ENCODE measurements at regions of chr1 and their contacts with region 1.

Region 1: DNA sequence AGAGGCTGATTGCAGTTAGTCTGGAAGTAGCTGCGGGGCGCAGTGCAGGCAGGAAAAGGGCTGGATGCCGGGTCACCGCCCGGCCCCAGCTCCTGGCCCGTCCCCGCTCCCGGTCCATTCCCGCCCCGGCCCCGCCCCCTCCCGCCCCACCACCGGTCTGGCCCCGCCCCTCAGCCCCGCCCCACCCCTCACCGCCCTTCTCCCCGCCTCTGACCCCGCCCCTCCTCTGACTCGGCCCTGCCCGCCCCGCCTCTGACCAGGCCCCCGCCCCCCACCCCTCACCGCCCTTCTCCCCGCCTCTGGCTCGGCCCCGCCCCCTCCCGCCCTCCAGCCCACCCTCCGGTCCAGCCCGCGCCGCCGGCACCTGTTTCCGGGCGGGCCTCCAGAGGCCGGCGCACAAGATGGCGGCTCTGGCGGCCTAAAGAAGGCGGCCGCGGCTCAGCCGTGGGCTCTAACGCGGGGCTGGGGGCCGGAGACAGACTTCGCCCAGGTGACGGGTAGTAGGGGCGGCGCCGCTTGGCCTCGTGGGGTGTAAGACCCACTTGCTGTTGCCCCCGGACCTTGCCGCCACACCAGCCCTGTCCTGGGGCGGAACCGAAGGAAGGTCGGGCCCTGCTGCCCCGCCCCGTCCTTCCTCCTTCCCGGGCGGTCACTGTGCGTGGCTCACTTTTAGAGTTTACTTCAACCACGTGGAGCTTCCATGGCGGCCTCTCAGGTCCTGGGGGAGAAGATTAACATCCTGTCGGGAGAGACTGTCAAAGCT is at the start of gene UBIAD1:
- DNase-seq: peak; percentile 76
- ATAC-seq: peak; percentile 88
- H3K4me3 ChIP-seq: peak within 1 kb of the TSS; percentile 93
- H3K27ac ChIP-seq: peak within 1 kb of the TSS; percentile 79
- H3K4me1 ChIP-seq: peaks cover 10% of the 10 kb centered on the region
- H3K27me3 ChIP-seq: no peaks in the 10 kb centered on the region
- CTCF ChIP-seq: no peak
- total RNA-seq, gene UBIAD1: 14.5 and 14.8 TPM in 2 replicates

Region 2: DNA sequence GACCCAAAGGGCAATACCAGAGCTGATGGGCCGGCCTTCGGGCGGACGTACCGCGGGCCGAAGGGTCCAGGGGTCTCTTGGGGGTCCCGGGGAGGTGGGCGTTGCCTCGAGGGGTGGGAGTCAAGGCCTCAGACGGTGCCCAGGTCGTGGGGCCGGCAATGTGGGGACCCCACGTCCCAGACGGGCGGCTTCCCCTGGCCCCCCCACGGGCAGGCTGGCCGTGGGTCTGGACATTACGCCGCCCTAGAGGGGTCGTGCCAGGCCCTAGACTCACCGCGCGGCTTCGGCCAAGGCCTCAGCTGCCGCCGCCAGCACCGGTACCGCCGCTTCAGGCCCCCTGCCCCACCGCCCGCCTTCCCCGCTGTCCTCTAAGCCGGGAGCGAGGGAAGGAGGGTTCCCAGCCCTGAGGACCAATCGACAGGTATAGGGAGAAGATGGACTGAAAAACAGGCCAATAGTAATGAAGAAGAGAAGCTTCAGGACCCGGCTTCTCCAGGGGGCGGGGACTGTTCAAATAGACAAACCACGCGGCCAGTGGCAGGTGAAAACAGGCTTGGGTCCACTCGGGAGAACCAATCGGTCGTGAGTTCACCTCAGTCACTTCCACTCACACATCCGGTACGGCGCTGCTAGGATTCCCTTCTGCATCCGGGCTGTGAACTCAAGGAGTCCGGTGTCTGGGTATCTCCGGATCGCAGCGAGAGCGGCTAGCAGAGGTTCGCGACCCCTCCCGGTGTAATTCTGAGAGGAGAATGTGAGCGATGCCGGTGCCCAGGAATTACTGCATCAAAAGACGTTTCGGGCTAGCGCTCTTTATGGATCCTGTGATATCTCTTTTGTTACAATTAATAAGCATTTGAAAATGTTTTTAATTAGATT is 10.6 kb before region 1 on chr1 and contains the start of gene MTOR:
- CTCF ChIA-PET with region 1: interaction called, 3 read pairs
- POLR2A ChIA-PET with region 1: interaction called, 8 read pairs
- intact Hi-C with region 1: loop called (anchors 1 kb)
- DNase-seq: peak; percentile 99
- ATAC-seq: peak; percentile 97
- H3K4me3 ChIP-seq: peak within 1 kb of the TSS; percentile 96
- H3K27ac ChIP-seq: no peak within 1 kb of the TSS
- H3K4me1 ChIP-seq: peaks cover 5% of the 10 kb centered on the region; the same call in 1 of the 2 replicates
- H3K27me3 ChIP-seq: no peaks in the 10 kb centered on the region
- CTCF ChIP-seq: peak; percentile 41
- total RNA-seq, gene MTOR: 48.0 and 53.6 TPM in 2 replicates

Region 3: GRCh38 chr1:12244078-12244477 is 971.1 kb after region 1 on chr1:
- CTCF ChIA-PET with region 1: no interaction called
- POLR2A ChIA-PET with region 1: interaction called, 22 read pairs
- intact Hi-C with region 1: no loop called
- DNase-seq: peak; percentile 37
- ATAC-seq: no peak
- H3K4me3 ChIP-seq: no peak overlapping the region
- H3K27ac ChIP-seq: no peak overlapping the region
- H3K4me1 ChIP-seq: peaks cover 34% of the 10 kb centered on the region
- H3K27me3 ChIP-seq: no peaks in the 10 kb centered on the region
- CTCF ChIP-seq: peak; percentile 56